ENCODE measurements at regions of chr11 and their contacts with region 1.

Region 1: GRCh38 chr11:122505304-122506006 is 150.1 kb upstream of the UBASH3B start:
- DNase-seq: peak; percentile 54
- H3K4me3 Mint-ChIP-seq: no peak overlapping the region
- H3K27ac Mint-ChIP-seq: no peak overlapping the region
- H3K4me1 Mint-ChIP-seq: no peaks in the 10 kb centered on the region
- H3K27me3 Mint-ChIP-seq: peaks cover 10% of the 10 kb centered on the region

Region 2: GRCh38 chr11:122215244-122215992 is 290.0 kb before region 1 on chr11:
- CTCF ChIA-PET with region 1: interaction called, 16 read pairs
- POLR2A ChIA-PET with region 1: no interaction called
- DNase-seq: peak; percentile 34
- H3K4me3 Mint-ChIP-seq: no peak overlapping the region
- H3K27ac Mint-ChIP-seq: no peak overlapping the region
- H3K4me1 Mint-ChIP-seq: no peaks in the 10 kb centered on the region
- H3K27me3 Mint-ChIP-seq: no peaks in the 10 kb centered on the region

Region 3: DNA sequence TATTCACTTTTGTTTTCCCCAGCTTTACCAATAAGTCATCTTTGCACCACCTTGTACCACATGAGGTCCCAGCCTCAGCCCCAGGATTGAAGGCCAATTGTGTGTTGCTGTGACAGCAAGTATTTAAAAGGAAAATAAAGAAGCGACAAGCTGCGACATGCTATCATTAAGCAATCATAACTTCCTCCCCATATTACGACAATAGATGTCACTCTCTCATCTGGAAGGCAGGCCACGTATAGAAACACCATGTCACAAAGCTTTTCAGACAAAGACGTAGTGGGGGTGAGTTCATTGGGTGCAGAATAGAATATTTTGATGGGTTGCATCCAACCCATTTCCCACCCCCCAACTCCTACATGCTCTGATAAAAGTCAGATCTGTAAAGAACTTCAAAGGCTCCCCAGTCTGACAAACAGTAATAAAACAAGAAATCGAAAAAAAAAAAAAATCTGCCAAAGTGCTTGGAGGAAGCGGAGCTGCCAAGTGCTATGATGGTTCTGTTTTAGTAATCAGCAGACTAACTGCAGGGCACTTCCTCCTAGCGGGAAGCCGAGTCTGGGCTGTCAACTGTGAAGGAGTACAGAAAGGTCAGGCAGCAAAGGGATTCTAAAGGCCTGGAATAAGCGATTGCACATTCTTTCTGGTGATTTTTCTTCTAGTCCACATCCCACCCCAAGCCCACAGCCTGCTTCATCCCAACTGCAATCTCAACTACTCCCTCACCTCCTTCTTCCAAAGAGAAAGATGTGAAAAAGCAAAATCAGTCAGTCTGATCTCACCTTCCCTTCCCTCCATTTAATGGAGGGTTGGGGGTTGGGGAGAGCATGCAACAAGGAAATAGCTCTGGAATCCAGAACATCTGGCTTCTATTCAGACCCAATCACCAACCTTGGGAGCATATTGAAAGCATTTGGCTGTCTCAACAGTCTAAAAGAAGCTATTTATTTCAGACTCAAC is 18.7 kb after region 1 on chr11:
- CTCF ChIA-PET with region 1: no interaction called
- POLR2A ChIA-PET with region 1: no interaction called
- DNase-seq: no peak
- H3K4me3 Mint-ChIP-seq: no peak overlapping the region
- H3K27ac Mint-ChIP-seq: no peak overlapping the region
- H3K4me1 Mint-ChIP-seq: no peaks in the 10 kb centered on the region
- H3K27me3 Mint-ChIP-seq: peaks cover 16% of the 10 kb centered on the region

Measured in activated CD4-positive, alpha-beta memory T cell treated with anti-CD3 and anti-CD28 coated beads, Interleukin-2, amount 10 ng/mL, durations not matched to agents 7 days and 5 days (primary cell).